Cardiac septum (tissue), 1 donor: ENCODE measurements at regions of chr6 and their contacts with region 1.

Region 1: GRCh38 chr6:109009236-109009961 is 85.2 kb downstream of the SESN1 start:
- DNase-seq: peak; percentile 98

Region 2: DNA sequence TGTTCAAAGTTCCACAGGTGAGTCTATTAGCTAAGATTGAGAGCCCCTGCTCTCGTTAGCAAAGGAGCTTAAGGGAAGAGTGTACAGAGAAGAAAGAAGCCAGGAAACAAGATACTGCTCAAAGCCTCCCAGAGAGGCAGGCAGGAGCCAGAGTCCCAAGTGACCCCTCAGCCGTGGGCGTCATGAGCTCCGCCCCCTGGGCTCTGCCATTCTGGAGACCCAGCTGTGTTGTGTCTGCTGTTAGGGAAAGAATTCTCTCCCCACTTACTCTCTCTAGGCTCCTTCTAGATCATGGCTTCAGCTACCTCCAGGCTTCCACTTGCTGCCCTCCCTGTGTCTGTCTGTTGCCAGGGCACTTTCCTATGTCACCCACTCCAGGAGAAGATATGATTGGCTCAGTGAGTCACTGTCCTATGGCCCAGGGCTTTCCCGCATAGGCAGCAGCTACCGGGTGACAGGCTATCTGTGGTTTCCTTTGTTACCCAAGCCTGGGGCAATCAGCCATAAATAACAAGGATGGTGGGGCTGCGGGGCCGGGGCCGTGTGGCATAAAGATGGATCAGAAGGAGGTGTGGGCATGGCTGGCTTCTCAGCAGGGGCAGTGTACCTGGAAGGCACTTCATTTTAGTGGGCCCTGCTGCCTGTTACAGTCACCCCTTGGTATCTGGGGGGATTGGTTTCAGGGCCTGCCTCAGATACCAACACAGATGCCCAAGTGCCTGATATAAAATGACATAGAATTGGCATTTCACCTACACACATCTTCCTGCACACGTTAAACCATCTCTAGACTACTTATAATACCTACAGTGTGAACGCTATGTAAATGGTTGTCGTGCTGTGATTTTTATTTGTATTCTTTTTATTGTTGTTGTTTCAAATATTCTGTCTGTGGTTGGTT is 42.3 kb before region 1 on chr6:
- intact Hi-C with region 1: loop called (anchors 5 kb)
- DNase-seq: peak; percentile 85

Region 3: GRCh38 chr6:109055771-109056235 is 46.4 kb after region 1 on chr6:
- intact Hi-C with region 1: no loop called
- DNase-seq: no peak